GM12878 (cell line): ENCODE measurements at regions of chr1 and their contacts with region 1.

Region 1: DNA sequence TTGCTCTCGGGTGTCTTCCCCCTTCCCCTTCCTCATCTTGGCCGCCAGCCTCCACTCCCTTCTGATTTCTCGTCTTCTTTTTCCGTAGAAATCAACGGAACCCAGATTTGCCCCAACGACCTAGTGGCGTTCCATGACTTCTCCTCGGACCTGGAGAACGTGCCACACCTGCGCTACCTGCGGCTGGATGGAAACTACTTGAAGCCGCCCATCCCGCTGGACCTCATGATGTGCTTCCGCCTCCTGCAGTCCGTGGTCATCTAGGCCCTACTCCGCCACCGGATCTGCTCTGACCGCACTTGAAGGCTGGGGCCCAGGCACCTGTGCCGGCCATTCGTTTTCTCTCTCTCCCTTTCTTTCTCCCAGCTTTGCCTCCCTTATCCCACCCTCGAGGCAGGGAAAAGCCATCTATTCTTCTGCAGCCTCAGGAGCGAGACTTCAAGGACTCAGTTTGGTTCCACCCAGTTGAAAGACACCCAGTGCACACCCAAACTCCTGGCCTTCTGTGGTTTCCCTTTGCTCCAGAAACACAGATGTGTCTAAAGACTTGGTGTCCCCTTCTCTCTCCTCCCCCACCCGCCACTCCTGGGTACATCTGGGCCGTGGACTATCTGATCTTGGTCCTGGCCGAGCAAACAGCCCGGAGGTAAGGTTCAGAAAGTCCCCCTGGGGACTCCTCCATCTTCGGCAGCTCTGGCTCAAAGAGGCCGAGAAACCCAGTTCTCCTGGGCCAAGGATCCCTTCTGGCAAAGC is 7.2 kb upstream of the OPTC start:
- DNase-seq: no peak
- ATAC-seq: peak; percentile 7; the same call in 2 of the 3 replicates
- H3K4me3 ChIP-seq: no peak overlapping the region
- H3K27ac ChIP-seq: no peak overlapping the region
- H3K4me1 ChIP-seq: 0 out of 2 replicates have a peak, but pooled peaks cover 3% of the 10 kb centered on the region
- H3K27me3 ChIP-seq: peaks cover 0 to 10% of the 10 kb centered on the region in 2 experiments; a peak in 2 of 4 replicates
- CTCF ChIP-seq: no peak
- EP300 ChIP-seq: no peak
- POLR2A ChIP-seq: no peak
- RAD21 ChIP-seq: no peak

Region 2: DNA sequence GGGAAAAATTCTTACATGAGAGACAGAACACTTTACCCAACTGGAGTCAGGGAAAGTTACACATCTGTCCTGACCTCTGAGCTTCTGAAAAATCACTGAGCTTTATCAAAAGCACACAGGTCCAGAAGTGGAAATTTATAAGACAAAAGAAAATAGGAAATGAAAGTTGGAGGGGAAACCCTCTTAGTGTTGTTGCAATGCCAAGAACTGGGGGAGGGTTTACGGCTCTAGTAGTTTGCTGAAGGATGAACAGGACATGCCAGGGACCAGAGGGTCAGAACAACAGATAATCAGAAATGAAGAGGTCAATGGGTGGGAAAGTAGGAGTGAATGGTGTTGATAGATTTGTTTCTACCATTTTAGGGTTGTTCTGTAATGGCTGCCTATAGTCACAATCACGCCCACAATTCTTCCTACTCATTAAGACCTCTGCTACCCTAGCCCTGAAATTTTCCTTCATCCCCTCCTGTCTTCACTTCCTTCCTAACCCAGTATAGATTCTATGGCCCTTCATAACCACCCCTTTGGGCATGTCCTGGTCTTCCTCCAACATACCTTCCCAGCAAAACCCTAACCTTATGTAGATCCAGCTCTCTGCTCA is 105.5 kb before region 1 on chr1:
- CTCF ChIA-PET with region 1: interaction called, 18 read pairs
- POLR2A ChIA-PET with region 1: no interaction called
- RAD21 ChIA-PET with region 1: interaction called, 9 read pairs
- SMC1A ChIA-PET with region 1: interaction called, 4 read pairs
- in situ Hi-C with region 1: no loop called
- intact Hi-C with region 1: no loop called
- DNase-seq: peak; percentile 70
- ATAC-seq: peak; percentile 95
- H3K4me3 ChIP-seq: peak overlapping the region; percentile 50
- H3K27ac ChIP-seq: peak overlapping the region; percentile 81
- H3K4me1 ChIP-seq: peaks cover 25% of the 10 kb centered on the region
- H3K27me3 ChIP-seq: no peaks in the 10 kb centered on the region
- CTCF ChIP-seq: no peak
- EP300 ChIP-seq: peak in 1 of 2 experiments; percentile 86; a peak in 3 of 4 replicates
- POLR2A ChIP-seq: no peak
- RAD21 ChIP-seq: no peak

Region 3: DNA sequence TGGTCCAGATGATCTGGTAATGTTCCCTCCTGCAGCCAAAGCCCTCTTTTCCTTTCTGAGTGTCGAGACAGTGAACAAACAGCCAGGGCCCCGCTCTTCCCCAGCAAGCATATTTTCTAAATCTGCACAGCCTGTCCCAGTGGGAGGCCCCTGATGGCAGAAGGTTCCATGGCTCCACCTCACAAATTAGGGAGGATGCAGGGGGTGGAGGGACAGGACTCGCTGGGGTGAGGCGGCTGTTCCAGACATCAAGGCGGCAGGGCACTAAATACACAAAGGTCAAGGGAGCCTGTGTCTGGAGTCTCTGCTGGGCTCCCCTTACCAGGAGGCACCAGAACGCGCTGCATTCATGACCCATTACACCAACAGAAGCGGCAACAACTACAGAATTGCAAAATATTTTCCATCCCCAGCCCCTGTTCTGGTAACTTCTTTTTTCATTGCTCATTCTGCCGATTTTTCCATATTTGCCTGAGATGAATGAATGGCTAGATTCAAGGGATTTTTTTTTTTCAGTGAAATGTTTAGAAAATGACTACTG is 38.2 kb before region 1 on chr1:
- CTCF ChIA-PET with region 1: interaction called, 37 read pairs
- POLR2A ChIA-PET with region 1: interaction called, 3 read pairs
- RAD21 ChIA-PET with region 1: interaction called, 8 read pairs
- SMC1A ChIA-PET with region 1: interaction called, 7 read pairs
- in situ Hi-C with region 1: no loop called
- intact Hi-C with region 1: loop called (anchors 5 kb)
- DNase-seq: no peak
- ATAC-seq: no peak
- H3K4me3 ChIP-seq: no peak overlapping the region
- H3K27ac ChIP-seq: no peak overlapping the region
- H3K4me1 ChIP-seq: peaks cover 2% of the 10 kb centered on the region; the same call in 1 of the 2 replicates
- H3K27me3 ChIP-seq: no peaks in the 10 kb centered on the region
- CTCF ChIP-seq: no peak
- EP300 ChIP-seq: no peak
- POLR2A ChIP-seq: no peak
- RAD21 ChIP-seq: no peak

Region 4: DNA sequence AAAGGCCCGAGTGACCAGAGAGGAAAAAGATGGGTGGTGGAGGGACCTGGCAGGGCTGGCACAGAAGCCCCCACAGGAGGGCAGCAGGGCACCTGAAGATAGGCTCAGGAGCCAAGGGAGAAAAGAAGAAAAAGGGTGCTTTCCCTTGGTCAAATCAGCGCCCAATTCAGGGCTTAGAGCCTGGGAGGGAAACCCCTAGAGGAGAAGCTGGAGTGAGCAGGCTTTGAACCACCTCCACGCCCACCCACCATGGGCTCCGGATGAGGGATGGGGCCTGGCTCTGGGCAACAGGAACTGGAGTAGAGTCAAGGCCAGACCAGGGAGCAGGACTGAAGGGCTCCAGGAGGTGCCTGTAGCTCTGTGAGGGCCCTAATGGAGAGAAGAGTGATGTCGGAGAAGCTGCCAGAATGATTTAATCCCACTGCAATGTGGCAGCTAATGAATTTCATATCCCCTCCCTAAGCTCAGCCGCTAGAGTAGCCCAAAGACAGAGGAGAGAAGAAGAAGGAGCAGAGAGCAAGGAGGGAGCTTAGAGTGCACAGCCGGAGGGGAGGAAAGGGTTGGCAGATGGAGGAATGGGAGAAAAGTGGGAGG is 23.2 kb before region 1 on chr1:
- CTCF ChIA-PET with region 1: interaction called, 82 read pairs
- POLR2A ChIA-PET with region 1: interaction called, 4 read pairs
- RAD21 ChIA-PET with region 1: interaction called, 17 read pairs
- SMC1A ChIA-PET with region 1: interaction called, 7 read pairs
- in situ Hi-C with region 1: no loop called
- intact Hi-C with region 1: no loop called
- DNase-seq: no peak
- ATAC-seq: peak; percentile 59
- H3K4me3 ChIP-seq: no peak overlapping the region
- H3K27ac ChIP-seq: no peak overlapping the region
- H3K4me1 ChIP-seq: no peaks in the 10 kb centered on the region
- H3K27me3 ChIP-seq: no peaks in the 10 kb centered on the region; a peak in 2 of 4 replicates
- CTCF ChIP-seq: peak; percentile 5 to 41 (median 13); a peak in 3 of 6 replicates
- EP300 ChIP-seq: no peak
- POLR2A ChIP-seq: no peak
- RAD21 ChIP-seq: no peak

Region 5: GRCh38 chr1:203593723-203594122 is 106.9 kb after region 1 on chr1:
- CTCF ChIA-PET with region 1: no interaction called
- POLR2A ChIA-PET with region 1: no interaction called
- RAD21 ChIA-PET with region 1: no interaction called
- SMC1A ChIA-PET with region 1: no interaction called
- in situ Hi-C with region 1: no loop called
- intact Hi-C with region 1: no loop called
- DNase-seq: no peak
- ATAC-seq: peak; percentile 91
- H3K4me3 ChIP-seq: no peak overlapping the region
- H3K27ac ChIP-seq: no peak overlapping the region
- H3K4me1 ChIP-seq: no peaks in the 10 kb centered on the region
- H3K27me3 ChIP-seq: peaks cover 1 to 3% of the 10 kb centered on the region in 2 experiments; a peak in 1 of 4 replicates
- CTCF ChIP-seq: peak; percentile 39 to 54 (median 49); a peak in 5 of 6 replicates
- EP300 ChIP-seq: no peak
- POLR2A ChIP-seq: no peak
- RAD21 ChIP-seq: peak; percentile 41

Region 6: GRCh38 chr1:203807196-203807595 is 320.4 kb after region 1 on chr1:
- CTCF ChIA-PET with region 1: no interaction called
- POLR2A ChIA-PET with region 1: no interaction called
- RAD21 ChIA-PET with region 1: no interaction called
- SMC1A ChIA-PET with region 1: no interaction called
- in situ Hi-C with region 1: no loop called
- intact Hi-C with region 1: no loop called
- DNase-seq: no peak
- ATAC-seq: no peak
- H3K4me3 ChIP-seq: no peak overlapping the region
- H3K27ac ChIP-seq: no peak overlapping the region
- H3K4me1 ChIP-seq: no peaks in the 10 kb centered on the region
- H3K27me3 ChIP-seq: no peaks in the 10 kb centered on the region
- CTCF ChIP-seq: no peak
- EP300 ChIP-seq: no peak
- POLR2A ChIP-seq: no peak
- RAD21 ChIP-seq: no peak

Region 7: DNA sequence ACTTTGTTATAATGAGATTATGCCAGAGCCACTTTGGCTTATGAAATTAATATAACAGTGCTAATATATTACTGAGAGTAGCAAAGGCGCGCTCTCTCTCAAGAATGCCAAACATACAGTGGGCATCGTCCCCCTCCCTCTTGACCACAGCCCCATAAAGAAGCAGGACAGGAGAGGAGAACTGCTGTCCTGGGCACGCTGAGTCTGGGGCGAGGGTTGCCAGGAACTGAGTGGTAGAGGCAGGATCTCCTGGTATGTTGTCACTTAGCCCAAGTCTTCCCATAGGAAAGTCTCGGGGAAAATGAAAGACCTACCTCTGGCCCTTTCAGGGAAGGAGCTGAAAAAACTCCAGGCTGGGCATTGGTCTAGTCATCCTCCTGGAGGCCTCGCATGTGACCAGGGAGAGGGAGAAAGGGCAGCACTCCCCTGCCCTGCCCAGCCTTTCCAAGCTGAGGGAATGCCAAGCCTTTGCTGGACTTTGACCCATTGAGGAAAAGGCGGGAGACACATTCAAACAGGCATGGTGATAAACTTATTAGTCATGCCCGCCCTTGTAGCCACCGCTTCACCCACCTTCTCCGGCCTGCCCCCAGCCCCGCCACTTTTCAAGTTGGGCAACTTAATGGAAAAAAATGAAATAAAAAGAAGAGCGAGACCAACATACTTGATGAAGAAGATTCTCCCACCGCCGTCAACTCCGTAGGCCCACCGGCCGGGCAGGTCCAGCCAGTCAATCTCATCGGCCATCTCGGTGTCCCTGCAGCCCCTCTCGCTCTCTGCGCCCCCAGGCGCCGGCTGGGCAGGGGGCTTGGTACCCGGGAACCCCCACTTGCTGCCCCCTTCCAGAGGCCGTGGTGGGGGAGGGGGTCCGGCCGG is 890.4 kb after region 1 on chr1:
- CTCF ChIA-PET with region 1: no interaction called
- POLR2A ChIA-PET with region 1: no interaction called
- RAD21 ChIA-PET with region 1: no interaction called
- SMC1A ChIA-PET with region 1: no interaction called
- in situ Hi-C with region 1: no loop called
- intact Hi-C with region 1: no loop called
- DNase-seq: no peak
- ATAC-seq: no peak
- H3K4me3 ChIP-seq: peak overlapping the region; percentile 57; the same call in 1 of the 2 replicates
- H3K27ac ChIP-seq: no peak overlapping the region
- H3K4me1 ChIP-seq: no peaks in the 10 kb centered on the region; the same call in 1 of the 2 replicates
- H3K27me3 ChIP-seq: peaks cover 4 to 5% of the 10 kb centered on the region in 2 experiments; a peak in 3 of 4 replicates
- CTCF ChIP-seq: no peak
- EP300 ChIP-seq: no peak
- POLR2A ChIP-seq: no peak
- RAD21 ChIP-seq: no peak